Activated CD4-positive, alpha-beta T cell treated with anti-CD3 and anti-CD28 coated beads, Interleukin-2, amount 10 ng/mL, durations not matched to agents 7 days and 5 days (primary cell): ENCODE measurements at regions of chr17 and their contacts with region 1.

Region 1: DNA sequence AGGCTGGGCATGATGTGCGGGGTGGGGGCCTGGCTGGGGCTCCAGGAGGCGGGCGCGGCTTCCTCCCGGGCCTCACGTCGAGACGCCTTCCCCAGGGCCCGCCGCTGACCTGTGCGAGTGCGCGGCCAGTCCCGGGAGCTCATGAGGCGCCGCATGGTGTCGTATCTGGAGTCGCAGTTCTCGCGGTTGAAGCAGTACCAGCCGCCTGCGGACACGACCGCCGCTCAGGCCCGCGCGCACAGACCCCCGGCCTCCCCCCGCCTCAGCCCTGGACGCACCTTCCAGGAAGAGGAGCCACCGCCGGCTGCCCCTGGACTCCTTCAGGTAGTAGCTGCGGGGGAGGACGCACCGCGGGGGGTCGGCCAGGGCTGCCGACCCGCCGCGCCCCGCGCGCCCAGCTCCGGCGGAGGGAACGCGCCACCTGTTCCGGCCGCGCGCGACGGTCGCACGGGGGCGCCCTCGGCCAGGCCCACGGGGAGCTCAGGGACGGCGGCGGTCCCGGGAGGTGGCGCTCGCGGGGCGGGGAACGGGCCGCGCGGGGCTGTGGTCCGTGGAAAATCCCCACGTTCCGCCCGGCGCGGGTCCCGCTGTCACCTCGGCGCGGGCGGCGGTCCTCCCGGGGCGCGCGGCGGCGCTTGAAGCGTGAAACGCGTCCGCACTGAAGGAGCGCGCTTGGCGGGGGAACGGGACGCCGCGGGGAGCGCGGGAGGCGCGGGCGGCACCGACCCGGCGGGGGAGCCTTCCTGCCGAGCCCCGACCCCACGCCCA is 1.4 kb downstream of the NOTUM start:
- DNase-seq: peak; percentile 78
- H3K4me3 Mint-ChIP-seq: no peak overlapping the region
- H3K27ac Mint-ChIP-seq: no peak overlapping the region
- H3K4me1 Mint-ChIP-seq: peaks cover 4% of the 10 kb centered on the region
- H3K27me3 Mint-ChIP-seq: peaks cover 36% of the 10 kb centered on the region

Region 2: DNA sequence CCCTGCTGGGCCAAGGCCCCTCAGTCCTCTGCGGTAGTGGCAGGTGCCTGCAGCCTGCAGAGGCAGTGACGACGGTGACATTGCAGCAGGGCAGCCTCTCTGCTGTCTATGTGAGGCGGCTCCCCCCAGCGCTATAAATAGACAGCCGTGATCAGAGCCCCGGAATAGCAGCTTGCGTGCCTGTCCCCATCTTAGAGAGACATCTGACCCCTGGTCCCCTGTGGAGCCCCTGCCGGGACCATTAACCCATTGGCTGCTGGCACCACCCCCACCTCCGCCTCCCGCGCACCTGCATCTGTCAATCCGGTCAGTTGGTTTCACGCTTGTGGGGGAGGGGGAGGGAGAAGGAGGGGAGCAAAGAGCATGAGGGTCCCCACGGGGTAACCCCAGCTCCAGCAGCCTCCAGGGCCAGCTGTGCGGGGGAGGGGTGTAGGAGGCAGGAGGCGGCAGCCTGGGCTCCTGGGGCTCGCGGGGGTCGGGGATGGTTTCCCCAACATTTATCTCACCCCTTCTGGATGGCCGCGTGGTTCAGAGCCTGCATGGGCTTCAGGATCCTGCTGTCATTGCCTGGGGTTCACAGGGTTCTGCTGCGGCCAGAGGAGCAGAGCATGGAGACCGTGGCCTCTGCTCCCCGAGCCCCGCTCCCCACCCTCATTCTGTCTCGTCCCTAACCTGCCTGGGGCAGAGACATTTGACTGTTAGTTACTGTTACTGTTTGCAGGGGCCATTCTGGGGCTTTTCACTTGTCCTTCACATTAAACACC is 17.6 kb before region 1 on chr17:
- CTCF ChIA-PET with region 1: interaction called, 32 read pairs
- POLR2A ChIA-PET with region 1: no interaction called
- DNase-seq: no peak
- H3K4me3 Mint-ChIP-seq: no peak overlapping the region
- H3K27ac Mint-ChIP-seq: no peak overlapping the region
- H3K4me1 Mint-ChIP-seq: peaks cover 6% of the 10 kb centered on the region
- H3K27me3 Mint-ChIP-seq: no peaks in the 10 kb centered on the region

Region 3: DNA sequence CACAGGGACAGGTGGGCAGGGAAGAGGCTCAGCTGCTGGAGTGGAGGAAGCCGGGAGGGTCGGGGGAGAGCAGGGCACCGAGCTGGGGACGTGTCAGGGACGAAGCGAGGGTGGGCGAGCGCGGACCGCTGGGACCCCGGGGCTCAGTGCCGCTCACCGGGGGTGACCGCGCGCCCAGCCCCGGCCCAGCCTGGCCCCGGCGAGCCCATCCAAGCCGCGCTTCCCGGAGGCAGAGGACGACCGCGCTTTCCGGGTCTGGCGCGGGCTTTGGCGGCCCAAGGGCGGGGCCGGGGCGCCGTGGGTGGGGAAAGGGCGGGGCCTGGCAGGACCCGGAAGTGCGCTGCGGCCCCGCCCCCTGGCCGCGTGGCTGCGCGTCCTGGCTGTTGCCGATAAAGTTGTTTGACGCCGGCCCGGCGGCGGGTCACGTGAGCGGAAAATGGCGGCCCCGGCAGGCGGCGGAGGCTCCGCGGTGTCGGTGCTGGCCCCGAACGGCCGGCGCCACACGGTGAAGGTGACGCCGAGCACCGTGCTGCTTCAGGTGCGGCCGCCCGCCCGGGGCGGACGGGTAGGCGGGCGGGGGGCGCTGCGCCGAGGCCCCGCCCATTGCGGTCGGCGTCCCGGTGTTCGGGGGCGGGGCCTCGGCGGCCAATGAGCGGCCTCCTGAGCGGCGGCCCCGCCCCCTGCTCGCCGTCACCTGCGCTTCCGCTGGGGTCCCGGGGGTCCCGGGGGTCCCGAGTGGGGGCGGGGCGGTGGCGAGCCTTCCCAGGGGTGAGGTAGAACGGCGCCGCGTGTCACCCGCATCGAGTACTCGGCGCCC is 17.9 kb after region 1 on chr17 and contains the start of gene ASPSCR1:
- CTCF ChIA-PET with region 1: interaction called, 18 read pairs
- POLR2A ChIA-PET with region 1: no interaction called
- DNase-seq: peak; percentile 90
- H3K4me3 Mint-ChIP-seq: peak within 1 kb of the TSS; percentile 86
- H3K27ac Mint-ChIP-seq: peak within 1 kb of the TSS; percentile 97
- H3K4me1 Mint-ChIP-seq: peaks cover 45% of the 10 kb centered on the region
- H3K27me3 Mint-ChIP-seq: peaks cover 2% of the 10 kb centered on the region
- total RNA-seq, gene ASPSCR1: 34.0 to 37.6 TPM

Region 4: GRCh38 chr17:82022981-82023374 is 63.4 kb after region 1 on chr17 and contains the start of gene LRRC45:
- CTCF ChIA-PET with region 1: interaction called, 66 read pairs
- POLR2A ChIA-PET with region 1: interaction called, 3 read pairs
- DNase-seq: peak; percentile 100
- H3K4me3 Mint-ChIP-seq: peak within 1 kb of the TSS; percentile 84
- H3K27ac Mint-ChIP-seq: peak within 1 kb of the TSS; percentile 82
- H3K4me1 Mint-ChIP-seq: peaks cover 47% of the 10 kb centered on the region
- H3K27me3 Mint-ChIP-seq: no peaks in the 10 kb centered on the region
- total RNA-seq, gene LRRC45: 54.5 to 68.4 TPM

Region 5: DNA sequence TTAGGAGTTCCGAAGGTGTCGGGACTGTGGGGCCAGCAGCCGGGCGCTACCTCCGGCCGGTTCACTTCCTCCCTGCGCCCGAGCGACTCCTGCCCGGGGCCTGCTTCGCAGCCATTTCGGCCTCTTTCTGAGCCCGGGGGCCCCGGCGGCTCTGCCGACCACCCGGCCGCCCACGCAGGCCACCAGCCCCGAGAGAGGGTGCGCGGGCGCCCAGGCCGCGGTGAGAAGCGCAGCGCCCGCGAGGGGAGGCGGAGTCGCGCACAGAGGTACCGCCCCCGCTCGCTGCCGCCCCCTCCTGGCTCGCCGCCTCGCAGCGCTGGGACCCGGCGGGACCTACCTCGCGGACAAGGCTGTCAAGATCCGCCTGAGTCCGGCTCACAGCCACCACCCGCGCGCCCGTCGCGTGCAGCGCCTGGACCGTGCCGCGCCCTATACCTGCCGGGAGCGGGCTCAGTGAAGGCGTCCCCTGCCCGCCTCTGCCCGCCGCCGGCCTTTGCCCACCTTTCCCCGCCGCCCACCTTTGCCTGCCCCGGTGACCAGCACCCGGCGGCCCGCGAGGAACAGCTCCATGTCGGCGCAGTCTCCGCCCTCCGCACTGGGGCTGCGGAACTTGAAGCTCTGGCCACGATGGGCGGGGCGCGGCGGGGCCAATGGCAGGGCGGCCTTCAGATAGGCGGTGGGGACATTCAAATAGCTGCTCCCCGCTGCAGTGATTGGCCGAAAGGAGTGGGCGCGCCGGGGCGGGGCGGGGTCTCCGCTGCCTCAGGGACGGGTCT is 77.8 kb after region 1 on chr17 and contains the start of gene DCXR:
- CTCF ChIA-PET with region 1: interaction called, 11 read pairs
- POLR2A ChIA-PET with region 1: no interaction called
- DNase-seq: peak; percentile 98
- H3K4me3 Mint-ChIP-seq: peak within 1 kb of the TSS; percentile 85
- H3K27ac Mint-ChIP-seq: peak within 1 kb of the TSS; percentile 97
- H3K4me1 Mint-ChIP-seq: peaks cover 28% of the 10 kb centered on the region
- H3K27me3 Mint-ChIP-seq: no peaks in the 10 kb centered on the region
- total RNA-seq, gene DCXR: 140 to 144 TPM